Heart left ventricle (tissue), 16 donors: ENCODE measurements at regions of chr5 and their contacts with region 1.

Region 1: GRCh38 chr5:159444441-159445082 is 114.3 kb upstream of the IL12B start:
- DNase-seq: no peak
- ATAC-seq: peak in 1 of 4 donors; percentile 34
- H3K4me3 ChIP-seq: no peak overlapping the region
- H3K27ac ChIP-seq: no peak overlapping the region
- H3K4me1 ChIP-seq: peaks cover 0 to 28% (median 7%) of the 10 kb centered on the region in 12 donors
- H3K27me3 ChIP-seq: no peaks in the 10 kb centered on the region
- CTCF ChIP-seq: peak in 9 of 12 donors; percentile 9 to 55 (median 42)
- POLR2A ChIP-seq: no peak

Region 2: DNA sequence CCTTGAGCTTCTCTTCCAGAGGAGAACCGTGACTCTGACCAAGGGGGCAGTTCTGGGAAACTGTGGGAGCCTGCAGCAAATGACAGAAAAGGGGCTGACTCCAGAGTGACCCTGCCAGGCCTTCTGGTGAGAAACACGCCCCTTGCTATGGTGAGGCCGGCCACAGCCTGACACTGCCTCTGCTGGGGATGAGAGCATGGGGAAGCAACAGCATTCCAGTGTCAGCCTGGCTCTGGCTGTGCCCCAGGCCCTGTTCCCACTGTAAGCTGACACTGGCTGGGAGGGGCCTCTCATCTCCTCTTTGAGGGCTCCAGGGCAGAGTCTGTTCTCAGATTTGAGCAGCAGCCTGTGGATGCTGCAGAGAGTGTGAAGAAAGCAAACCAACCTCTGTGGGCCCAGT is 65.7 kb after region 1 on chr5:
- intact Hi-C with region 1: loop called in 3 of 10 experiments (anchors 5 kb)
- DNase-seq: peak; percentile 79 to 91 (median 86)
- ATAC-seq: peak; percentile 94 to 97 (median 96)
- H3K4me3 ChIP-seq: no peak overlapping the region
- H3K27ac ChIP-seq: peak overlapping the region; percentile 54 to 90 (median 80)
- H3K4me1 ChIP-seq: peaks cover 0 to 33% (median 14%) of the 10 kb centered on the region in 12 donors
- H3K27me3 ChIP-seq: no peaks in the 10 kb centered on the region
- CTCF ChIP-seq: peak in 3 of 12 donors; percentile 23 to 34 (median 24)
- POLR2A ChIP-seq: peak in 1 of 2 donors; percentile 47

Region 3: DNA sequence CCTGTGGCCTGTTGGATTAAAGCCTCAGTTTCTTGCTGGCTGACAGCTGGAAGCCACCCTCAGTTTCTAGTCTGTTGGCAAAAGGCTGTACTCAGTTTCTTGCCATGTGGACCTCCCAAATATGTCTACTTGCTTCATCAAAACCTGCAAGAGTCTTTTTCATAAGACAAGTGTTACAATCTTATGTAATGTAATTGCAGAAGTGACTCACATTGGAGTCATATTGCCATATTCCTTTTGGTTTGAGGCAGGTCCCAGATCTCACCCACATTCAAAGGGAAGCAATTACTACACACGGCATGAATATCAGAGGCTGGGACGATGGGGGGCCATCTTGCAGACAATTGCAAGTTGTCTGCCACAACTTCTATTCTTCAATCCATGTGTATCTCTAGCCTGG is 172.4 kb after region 1 on chr5:
- intact Hi-C with region 1: no loop called
- DNase-seq: no peak
- ATAC-seq: peak in 1 of 4 donors; percentile 42
- H3K4me3 ChIP-seq: no peak overlapping the region
- H3K27ac ChIP-seq: no peak overlapping the region
- H3K4me1 ChIP-seq: peaks cover 0 to 11% (median 0%) of the 10 kb centered on the region in 12 donors
- H3K27me3 ChIP-seq: no peaks in the 10 kb centered on the region
- CTCF ChIP-seq: no peak
- POLR2A ChIP-seq: no peak

Region 4: DNA sequence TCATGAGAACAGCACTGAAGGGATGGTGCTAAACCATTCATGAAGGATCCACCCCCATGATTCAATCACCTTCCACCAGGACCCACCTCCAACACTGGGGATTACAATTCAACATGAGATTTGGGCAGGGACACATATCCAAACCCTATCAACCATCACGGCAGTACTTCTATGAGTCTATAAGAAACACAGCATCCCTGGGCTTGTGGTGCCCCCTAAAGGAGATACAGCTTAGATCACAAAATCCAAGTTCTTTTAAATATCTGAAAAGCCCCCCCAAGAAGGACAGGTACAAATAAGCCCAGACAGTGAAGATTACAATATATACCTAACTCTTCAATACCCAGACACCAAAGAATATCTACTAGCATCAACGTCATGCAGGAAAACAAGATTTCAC is 238.1 kb after region 1 on chr5:
- intact Hi-C with region 1: loop called in 2 of 10 experiments (anchors 2 to 5 kb)
- DNase-seq: no peak
- ATAC-seq: peak in 2 of 4 donors; percentile 34 to 52
- H3K4me3 ChIP-seq: no peak overlapping the region
- H3K27ac ChIP-seq: no peak overlapping the region
- H3K4me1 ChIP-seq: no peaks in the 10 kb centered on the region
- H3K27me3 ChIP-seq: no peaks in the 10 kb centered on the region
- CTCF ChIP-seq: peak in 4 of 12 donors; percentile 7 to 22 (median 16)
- POLR2A ChIP-seq: no peak

Region 5: GRCh38 chr5:159786901-159787691 is 342.5 kb after region 1 on chr5:
- intact Hi-C with region 1: loop called in 1 of 10 experiments (anchors 10 kb)
- DNase-seq: peak in 3 of 5 donors; percentile 41 to 78 (median 59)
- ATAC-seq: peak; percentile 58 to 78 (median 74)
- H3K4me3 ChIP-seq: no peak overlapping the region
- H3K27ac ChIP-seq: peak overlapping the region in 4 of 12 donors; percentile 39 to 61 (median 48)
- H3K4me1 ChIP-seq: peaks cover 0 to 30% (median 0%) of the 10 kb centered on the region in 12 donors
- H3K27me3 ChIP-seq: no peaks in the 10 kb centered on the region
- CTCF ChIP-seq: no peak
- POLR2A ChIP-seq: no peak

Region 6: GRCh38 chr5:159965031-159965837 is 520.7 kb after region 1 on chr5:
- intact Hi-C with region 1: loop called in 5 of 10 experiments (anchors 1 to 10 kb)
- DNase-seq: peak in 4 of 5 donors; percentile 35 to 65 (median 54)
- ATAC-seq: peak; percentile 69 to 85 (median 77)
- H3K4me3 ChIP-seq: no peak overlapping the region
- H3K27ac ChIP-seq: no peak overlapping the region
- H3K4me1 ChIP-seq: peaks cover 0 to 4% (median 0%) of the 10 kb centered on the region in 12 donors
- H3K27me3 ChIP-seq: peaks cover 0 to 24% (median 2%) of the 10 kb centered on the region in 9 donors
- CTCF ChIP-seq: peak; percentile 38 to 79 (median 63)
- POLR2A ChIP-seq: no peak